Sigmoid colon (tissue), 7 donors: ENCODE measurements at regions of chr6 and their contacts with region 1.

Region 1: DNA sequence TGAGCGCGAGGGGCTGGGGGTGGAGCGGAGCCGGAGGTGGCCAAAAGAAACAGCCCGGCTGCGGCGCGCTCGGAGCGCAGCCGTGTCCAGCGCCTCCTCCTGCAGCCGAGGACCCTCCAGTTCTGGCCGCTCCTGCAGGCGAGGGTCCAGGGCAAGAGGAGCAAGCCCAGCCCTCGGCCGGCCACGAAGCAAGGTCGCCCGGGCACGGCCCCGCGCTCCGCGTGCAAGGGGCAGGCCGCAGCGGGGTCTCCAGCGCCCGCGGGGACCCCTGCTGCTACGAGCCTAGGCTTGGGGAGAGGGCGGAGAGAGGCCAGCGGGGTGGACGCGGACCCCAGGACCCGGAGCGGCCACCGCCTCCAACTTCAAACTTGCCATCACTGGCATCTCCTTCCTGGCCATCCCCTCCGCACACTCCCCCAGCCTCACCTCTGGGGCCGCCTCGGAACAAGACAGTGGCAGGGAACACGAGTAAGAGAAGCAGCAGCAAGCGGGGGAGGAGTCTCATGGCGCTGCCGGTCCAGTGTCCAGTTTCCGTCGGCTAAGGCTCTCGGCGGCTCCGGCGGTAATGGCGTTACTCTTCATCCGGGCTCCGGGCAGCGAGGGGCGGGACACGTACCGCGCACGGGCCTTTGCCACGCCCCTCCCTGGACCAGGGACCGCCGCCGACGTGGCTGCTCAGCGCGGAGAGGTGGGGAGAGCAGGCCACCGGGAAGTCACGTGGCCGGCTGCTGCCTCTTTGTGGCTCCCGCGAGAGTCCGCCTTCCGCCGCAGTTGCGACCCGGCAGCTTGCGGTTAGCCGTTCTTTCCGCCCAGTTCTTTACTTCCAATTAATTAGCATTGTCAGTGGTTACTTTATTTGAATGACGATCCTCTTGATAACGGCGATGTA is at the start of gene SSR1:
- DNase-seq: peak; percentile 99
- H3K4me3 ChIP-seq: peak within 1 kb of the TSS; percentile 61 to 94 (median 76)
- H3K27ac ChIP-seq: peak within 1 kb of the TSS; percentile 89 to 95 (median 92)
- H3K4me1 ChIP-seq: peaks cover 0 to 26% (median 20%) of the 10 kb centered on the region in 4 donors
- H3K27me3 ChIP-seq: no peaks in the 10 kb centered on the region
- CTCF ChIP-seq: no peak
- EP300 ChIP-seq: peak in 1 of 4 donors; percentile 83
- POLR2A ChIP-seq: peak; percentile 20 to 77
- total RNA-seq, gene SSR1: 24.1 to 53.9 (median 33.3) TPM

Region 2: GRCh38 chr6:7389451-7390225 is 76.8 kb after region 1 on chr6 and contains the starts of genes CAGE1 and RIOK1:
- intact Hi-C with region 1: loop called (anchors 2 kb)
- DNase-seq: peak; percentile 97
- H3K4me3 ChIP-seq: peak within 1 kb of the TSS; percentile 50 to 77 (median 67)
- H3K27ac ChIP-seq: peak within 1 kb of the TSS; percentile 87 to 93 (median 91)
- H3K4me1 ChIP-seq: peaks cover 0 to 29% (median 22%) of the 10 kb centered on the region in 4 donors
- H3K27me3 ChIP-seq: no peaks in the 10 kb centered on the region
- CTCF ChIP-seq: peak in 1 of 4 experiments; percentile 7
- EP300 ChIP-seq: no peak
- POLR2A ChIP-seq: peak; percentile 51 to 79
- total RNA-seq, gene CAGE1: not detected
- total RNA-seq, gene RIOK1: 14.7 to 16.9 (median 15.9) TPM